ENCODE measurements at regions of chr12 and their contacts with region 1.

Region 1: GRCh38 chr12:54603173-54603814 is 14.8 kb upstream of the PPP1R1A start:
- DNase-seq: peak in 8 of 9 donors; percentile 20 to 68 (median 57)
- ATAC-seq: peak; percentile 93
- H3K4me3 ChIP-seq: no peak overlapping the region
- H3K4me3 Mint-ChIP-seq: peak overlapping the region in 1 of 10 donors; percentile 49
- H3K27ac ChIP-seq: no peak overlapping the region
- H3K27ac Mint-ChIP-seq: peak overlapping the region in 2 of 9 donors; percentile 5 to 33
- H3K4me1 ChIP-seq: no peaks in the 10 kb centered on the region
- H3K4me1 Mint-ChIP-seq: peaks cover 0 to 8% (median 7%) of the 10 kb centered on the region in 7 donors
- H3K27me3 ChIP-seq: no peaks in the 10 kb centered on the region
- H3K27me3 Mint-ChIP-seq: peaks cover 0 to 32% (median 12%) of the 10 kb centered on the region in 5 donors

Region 2: GRCh38 chr12:54658306-54659264 is 55.3 kb after region 1 on chr12:
- CTCF ChIA-PET with region 1: no interaction called
- POLR2A ChIA-PET with region 1: no interaction called
- intact Hi-C with region 1: loop called in 1 of 2 experiments (anchors 2 kb)
- DNase-seq: peak in 7 of 9 donors; percentile 10 to 37 (median 20)
- ATAC-seq: peak; percentile 66
- H3K4me3 ChIP-seq: no peak overlapping the region
- H3K4me3 Mint-ChIP-seq: no peak overlapping the region
- H3K27ac ChIP-seq: no peak overlapping the region
- H3K27ac Mint-ChIP-seq: no peak overlapping the region
- H3K4me1 ChIP-seq: no peaks in the 10 kb centered on the region
- H3K4me1 Mint-ChIP-seq: peaks cover 0 to 4% (median 0%) of the 10 kb centered on the region in 7 donors
- H3K27me3 ChIP-seq: peaks cover 0 to 4% of the 10 kb centered on the region in 2 donors
- H3K27me3 Mint-ChIP-seq: peaks cover 13 to 25% (median 19%) of the 10 kb centered on the region in 5 donors

Region 3: DNA sequence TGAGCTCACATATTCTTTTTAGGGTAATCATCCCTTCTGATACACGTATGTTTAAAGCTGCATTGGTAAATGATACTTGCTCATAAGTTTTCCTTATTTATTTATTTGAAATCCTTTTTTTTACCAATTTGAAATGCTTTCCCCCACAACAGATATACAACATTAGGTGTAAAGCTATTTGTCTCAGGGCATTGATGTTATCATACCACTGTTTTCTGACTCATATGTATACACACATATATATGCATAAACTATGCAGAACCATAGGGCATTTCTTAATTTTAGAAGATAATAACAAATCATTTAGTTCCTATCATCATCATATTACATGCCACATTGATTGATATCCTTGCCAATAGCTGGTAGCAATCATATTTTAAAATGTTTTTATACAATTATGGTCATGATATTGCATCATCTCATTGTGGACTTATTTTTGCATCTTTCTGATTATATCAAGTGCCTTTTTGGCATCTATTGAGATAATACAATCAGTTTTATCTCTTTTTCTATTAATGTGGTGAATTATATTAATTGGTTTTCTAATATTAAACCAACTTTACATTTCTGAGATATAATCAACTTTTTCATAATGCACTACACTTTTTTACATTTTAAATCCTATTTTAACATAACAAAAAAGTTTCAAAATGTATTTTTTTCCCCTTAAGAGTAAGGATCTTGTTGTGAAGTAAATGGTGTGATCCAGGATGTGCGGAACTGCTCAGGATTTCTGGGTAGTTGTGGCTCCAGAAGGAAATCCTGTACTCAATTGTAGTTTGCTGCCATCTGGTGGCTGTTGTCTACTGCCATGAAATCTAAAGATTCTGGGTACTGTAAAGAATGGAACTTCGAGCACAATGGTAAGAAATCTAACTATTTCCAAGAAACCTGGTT is 539.6 kb after region 1 on chr12:
- CTCF ChIA-PET with region 1: no interaction called
- POLR2A ChIA-PET with region 1: no interaction called
- intact Hi-C with region 1: loop called in 1 of 2 experiments (anchors 2 kb)
- DNase-seq: peak in 6 of 9 donors; percentile 10 to 41 (median 20)
- ATAC-seq: peak; percentile 29
- H3K4me3 ChIP-seq: no peak overlapping the region
- H3K4me3 Mint-ChIP-seq: no peak overlapping the region
- H3K27ac ChIP-seq: no peak overlapping the region
- H3K27ac Mint-ChIP-seq: no peak overlapping the region
- H3K4me1 ChIP-seq: no peaks in the 10 kb centered on the region
- H3K4me1 Mint-ChIP-seq: peaks cover 0 to 6% (median 0%) of the 10 kb centered on the region in 7 donors
- H3K27me3 ChIP-seq: no peaks in the 10 kb centered on the region
- H3K27me3 Mint-ChIP-seq: peaks cover 0 to 35% (median 0%) of the 10 kb centered on the region in 5 donors